ENCODE measurements at regions of chr17 and their contacts with region 1.

Region 1: DNA sequence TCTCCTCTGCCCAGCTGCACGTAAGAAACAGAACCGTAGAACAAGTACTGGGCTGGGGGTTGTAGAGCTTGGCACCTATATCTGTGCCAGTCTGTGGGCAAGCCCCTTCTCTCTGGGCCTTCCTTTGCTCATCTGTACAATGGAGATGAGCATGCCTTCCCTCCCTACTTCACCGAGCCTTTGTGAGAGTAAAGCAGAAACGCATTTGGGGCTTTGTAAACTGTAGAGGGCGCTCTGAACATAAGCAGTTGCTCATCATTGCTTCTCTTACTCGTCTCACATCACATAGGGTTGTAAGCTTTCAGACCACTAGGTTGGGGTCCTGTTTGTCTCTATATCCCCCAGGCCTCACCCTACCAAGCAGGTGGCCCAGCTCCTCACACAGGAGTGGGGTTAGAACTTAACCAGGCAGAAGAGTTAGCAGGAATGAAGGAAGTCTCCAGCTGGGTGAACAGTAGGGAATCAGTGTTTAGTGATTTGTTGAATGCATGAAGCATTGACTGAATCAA is 15.1 kb downstream of the SAMD14 start:
- DNase-seq: no peak

Region 2: DNA sequence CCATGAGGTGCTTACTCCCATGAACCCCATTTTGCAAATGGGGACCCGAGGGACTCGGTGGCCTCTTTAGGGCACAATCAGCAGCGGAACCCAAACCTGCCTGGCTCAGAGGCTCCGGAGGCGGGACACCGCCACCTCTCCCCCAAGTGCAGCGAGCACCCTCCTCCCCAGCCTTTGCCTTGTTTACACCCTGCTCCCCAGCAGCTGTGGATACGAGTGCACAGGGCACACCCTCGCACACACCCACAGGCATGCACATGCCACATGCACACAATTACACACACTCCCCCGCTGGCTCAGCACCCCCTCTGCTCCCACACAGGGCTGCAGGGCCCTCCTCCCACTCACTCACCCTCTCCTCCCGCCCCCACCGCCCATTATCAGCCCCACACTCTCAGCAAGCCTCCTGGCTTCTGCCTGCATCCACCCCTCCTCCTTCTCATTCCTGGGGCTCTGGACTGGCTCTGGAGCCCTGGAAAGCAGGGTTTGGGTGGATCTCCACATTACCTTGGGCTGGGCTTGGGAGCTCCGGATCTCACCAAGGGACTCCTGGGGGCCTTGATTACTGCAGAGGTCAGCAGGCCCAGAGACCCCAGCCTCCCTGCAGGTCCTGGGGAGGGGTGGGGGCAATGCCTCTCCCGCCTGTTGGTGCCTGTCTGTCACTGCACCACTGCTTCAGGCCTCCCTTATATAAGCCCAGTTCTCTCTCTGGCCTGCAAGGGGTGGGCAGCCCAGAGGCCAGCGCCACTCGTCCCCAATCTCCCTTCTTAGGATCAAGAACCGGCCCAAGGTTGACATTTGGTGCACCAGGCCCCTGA is 13.3 kb before region 1 on chr17:
- intact Hi-C with region 1: no loop called
- DNase-seq: no peak

Region 3: GRCh38 chr17:50151041-50151936 is 36.4 kb after region 1 on chr17:
- intact Hi-C with region 1: loop called (anchors 5 kb)
- DNase-seq: peak; percentile 97

Region 4: GRCh38 chr17:50161023-50161910 is 46.4 kb after region 1 on chr17:
- intact Hi-C with region 1: loop called (anchors 5 kb)
- DNase-seq: peak; percentile 98

Measured in cardiac septum (tissue), 1 donor.